ENCODE measurements at regions of chr2 and their contacts with region 1.

Region 1: GRCh38 chr2:216074794-216075193 is 6.8 kb downstream of the PECR start:
- DNase-seq: no peak
- ATAC-seq: no peak
- H3K4me3 ChIP-seq: no peak overlapping the region
- H3K27ac ChIP-seq: no peak overlapping the region
- H3K4me1 ChIP-seq: no peaks in the 10 kb centered on the region
- H3K27me3 ChIP-seq: no peaks in the 10 kb centered on the region
- CTCF ChIP-seq: no peak

Region 2: GRCh38 chr2:216051350-216051749 is 23.4 kb before region 1 on chr2:
- CTCF ChIA-PET with region 1: no interaction called
- POLR2A ChIA-PET with region 1: interaction called, 13 read pairs
- in situ Hi-C with region 1: no loop called
- intact Hi-C with region 1: no loop called
- DNase-seq: no peak
- ATAC-seq: no peak
- H3K4me3 ChIP-seq: no peak overlapping the region
- H3K27ac ChIP-seq: no peak overlapping the region
- H3K4me1 ChIP-seq: no peaks in the 10 kb centered on the region
- H3K27me3 ChIP-seq: no peaks in the 10 kb centered on the region
- CTCF ChIP-seq: no peak